ENCODE measurements at regions of chr19 and their contacts with region 1.

Region 1: GRCh38 chr19:24033301-24033962 is 53.6 kb upstream of the ZNF254 start:
- DNase-seq: peak; percentile 82 to 92 (median 86)
- H3K4me3 ChIP-seq: peak overlapping the region; percentile 94 to 98
- H3K4me3 Mint-ChIP-seq: peak overlapping the region; percentile 99 to 100 (median 100)
- H3K27ac ChIP-seq: peak overlapping the region; percentile 86
- H3K27ac Mint-ChIP-seq: peak overlapping the region; percentile 96 to 100 (median 99)
- H3K4me1 ChIP-seq: peaks cover 42% of the 10 kb centered on the region
- H3K4me1 Mint-ChIP-seq: peaks cover 29 to 76% (median 55%) of the 10 kb centered on the region in 4 donors
- H3K27me3 ChIP-seq: no peaks in the 10 kb centered on the region
- H3K27me3 Mint-ChIP-seq: no peaks in the 10 kb centered on the region

Region 2: DNA sequence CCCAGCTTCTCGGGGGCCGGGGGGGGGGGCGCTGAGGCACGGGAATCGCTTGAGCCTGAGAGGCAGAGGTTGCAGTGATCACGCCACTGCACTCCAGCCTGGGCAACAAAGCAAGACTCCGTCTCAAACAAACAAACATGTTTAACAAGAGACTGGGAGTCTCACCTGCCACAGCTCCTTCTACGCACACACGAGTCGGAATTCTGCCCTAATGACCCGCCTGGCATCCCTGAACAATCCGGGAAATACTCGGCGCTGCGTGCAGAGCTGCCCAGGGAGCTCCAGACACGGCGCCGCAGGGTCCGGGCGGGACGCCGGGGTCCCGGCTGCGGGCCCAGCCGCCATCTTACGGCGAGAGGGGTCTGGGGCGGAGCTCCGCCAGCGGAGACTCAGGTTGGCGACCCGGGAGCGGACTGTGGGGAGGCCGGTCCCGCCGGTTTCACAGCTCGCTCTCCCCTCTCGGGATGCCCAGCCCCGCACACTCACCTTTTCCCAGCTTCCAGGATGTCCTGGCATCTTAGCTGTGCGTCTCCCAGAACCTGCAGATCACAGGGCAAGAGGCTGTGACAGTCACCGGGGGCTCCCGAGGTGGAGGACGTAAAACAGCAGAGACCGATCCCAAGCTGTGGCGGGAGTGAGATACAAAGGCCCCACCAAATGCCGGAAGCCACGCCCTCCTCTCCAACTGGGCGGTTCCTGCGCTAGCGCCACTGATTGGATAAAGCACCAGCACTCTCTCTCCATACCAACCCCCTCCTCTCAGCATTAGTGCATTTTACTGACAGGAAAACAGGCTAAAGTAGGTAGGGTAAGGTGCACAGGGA is 759.6 kb before region 1 on chr19:
- CTCF ChIA-PET with region 1: no interaction called
- POLR2A ChIA-PET with region 1: interaction called, 15 read pairs
- intact Hi-C with region 1: loop called (anchors 1 kb)
- DNase-seq: peak; percentile 89 to 94 (median 90)
- H3K4me3 ChIP-seq: peak overlapping the region; percentile 94 to 99
- H3K4me3 Mint-ChIP-seq: peak overlapping the region; percentile 96 to 99 (median 98)
- H3K27ac ChIP-seq: peak overlapping the region; percentile 92
- H3K27ac Mint-ChIP-seq: peak overlapping the region; percentile 93 to 97 (median 97)
- H3K4me1 ChIP-seq: peaks cover 21% of the 10 kb centered on the region
- H3K4me1 Mint-ChIP-seq: peaks cover 21 to 55% (median 30%) of the 10 kb centered on the region in 4 donors
- H3K27me3 ChIP-seq: no peaks in the 10 kb centered on the region
- H3K27me3 Mint-ChIP-seq: no peaks in the 10 kb centered on the region

Region 3: GRCh38 chr19:23686621-23687423 is 346.6 kb before region 1 on chr19 and contains the start of gene ZNF675:
- CTCF ChIA-PET with region 1: no interaction called
- POLR2A ChIA-PET with region 1: interaction called, 19 read pairs
- intact Hi-C with region 1: loop called (anchors 1 kb)
- DNase-seq: peak; percentile 87 to 93 (median 88)
- H3K4me3 ChIP-seq: peak within 1 kb of the TSS; percentile 64 to 100
- H3K4me3 Mint-ChIP-seq: peak within 1 kb of the TSS; percentile 99 to 100 (median 99)
- H3K27ac ChIP-seq: peak within 1 kb of the TSS; percentile 83
- H3K27ac Mint-ChIP-seq: peak within 1 kb of the TSS; percentile 96 to 99 (median 98)
- H3K4me1 ChIP-seq: peaks cover 32% of the 10 kb centered on the region
- H3K4me1 Mint-ChIP-seq: peaks cover 35 to 60% (median 48%) of the 10 kb centered on the region in 4 donors
- H3K27me3 ChIP-seq: no peaks in the 10 kb centered on the region
- H3K27me3 Mint-ChIP-seq: no peaks in the 10 kb centered on the region
- total RNA-seq, gene ZNF675: 34.3 to 36.9 TPM

Region 4: DNA sequence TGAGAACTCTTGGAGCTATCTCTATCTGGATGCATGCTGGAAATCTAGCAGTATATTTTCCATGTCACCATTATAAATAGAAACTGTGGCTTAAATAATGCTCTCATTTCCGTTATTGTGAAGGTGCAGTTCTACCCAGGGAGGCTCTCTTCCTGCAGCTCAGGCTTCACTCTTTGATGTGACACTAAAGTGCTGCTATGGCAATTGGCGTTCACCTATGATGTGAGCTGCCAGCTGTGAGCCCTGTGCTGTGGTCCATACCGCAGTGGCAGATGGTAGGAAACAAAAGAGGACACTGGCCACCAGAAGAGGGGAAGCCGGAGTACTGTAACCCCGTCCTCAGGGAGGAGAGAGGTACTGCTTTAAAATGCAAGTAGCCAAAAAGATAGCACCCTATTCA is 234.1 kb before region 1 on chr19:
- CTCF ChIA-PET with region 1: no interaction called
- POLR2A ChIA-PET with region 1: interaction called, 8 read pairs
- intact Hi-C with region 1: loop called (anchors 5 kb)
- DNase-seq: peak; percentile 59 to 73 (median 65)
- H3K4me3 ChIP-seq: peak overlapping the region in 1 of 2 donors; percentile 45
- H3K4me3 Mint-ChIP-seq: peak overlapping the region; percentile 82 to 94 (median 88)
- H3K27ac ChIP-seq: peak overlapping the region; percentile 51
- H3K27ac Mint-ChIP-seq: peak overlapping the region; percentile 93 to 98 (median 96)
- H3K4me1 ChIP-seq: peaks cover 46% of the 10 kb centered on the region
- H3K4me1 Mint-ChIP-seq: peaks cover 26 to 52% (median 34%) of the 10 kb centered on the region in 4 donors
- H3K27me3 ChIP-seq: no peaks in the 10 kb centered on the region
- H3K27me3 Mint-ChIP-seq: no peaks in the 10 kb centered on the region

Region 5: GRCh38 chr19:23925285-23925684 is 108.1 kb before region 1 on chr19:
- CTCF ChIA-PET with region 1: no interaction called
- POLR2A ChIA-PET with region 1: no interaction called
- intact Hi-C with region 1: no loop called
- DNase-seq: no peak
- H3K4me3 ChIP-seq: no peak overlapping the region
- H3K4me3 Mint-ChIP-seq: no peak overlapping the region
- H3K27ac ChIP-seq: no peak overlapping the region
- H3K27ac Mint-ChIP-seq: no peak overlapping the region
- H3K4me1 ChIP-seq: no peaks in the 10 kb centered on the region
- H3K4me1 Mint-ChIP-seq: peaks cover 0 to 1% (median 0%) of the 10 kb centered on the region in 4 donors
- H3K27me3 ChIP-seq: no peaks in the 10 kb centered on the region
- H3K27me3 Mint-ChIP-seq: no peaks in the 10 kb centered on the region

Region 6: GRCh38 chr19:23991170-23991569 is 42.3 kb before region 1 on chr19:
- CTCF ChIA-PET with region 1: no interaction called
- POLR2A ChIA-PET with region 1: interaction called, 22 read pairs
- intact Hi-C with region 1: loop called (anchors 1 kb)
- DNase-seq: peak; percentile 9 to 48 (median 26)
- H3K4me3 ChIP-seq: no peak overlapping the region
- H3K4me3 Mint-ChIP-seq: peak overlapping the region in 3 of 8 donors; percentile 45 to 64 (median 54)
- H3K27ac ChIP-seq: no peak overlapping the region
- H3K27ac Mint-ChIP-seq: no peak overlapping the region
- H3K4me1 ChIP-seq: peaks cover 12% of the 10 kb centered on the region
- H3K4me1 Mint-ChIP-seq: peaks cover 12 to 15% (median 14%) of the 10 kb centered on the region in 4 donors
- H3K27me3 ChIP-seq: no peaks in the 10 kb centered on the region
- H3K27me3 Mint-ChIP-seq: no peaks in the 10 kb centered on the region

Measured in CD4-positive, alpha-beta memory T cell (primary cell).